IMR-90 (cell line): ENCODE measurements at regions of chr19 and their contacts with region 1.

Region 1: GRCh38 chr19:17511724-17512573 is 500 bp downstream of the PGLS start:
- DNase-seq: peak; percentile 75
- ATAC-seq: peak; percentile 59
- H3K4me3 ChIP-seq: peak overlapping the region; percentile 54
- H3K27ac ChIP-seq: peak overlapping the region; percentile 87
- H3K4me1 ChIP-seq: peaks cover 16% of the 10 kb centered on the region
- H3K27me3 ChIP-seq: no peaks in the 10 kb centered on the region
- CTCF ChIP-seq: no peak
- POLR2A ChIP-seq: no peak; the same call in 1 of the 2 replicates
- RAD21 ChIP-seq: no peak

Region 2: DNA sequence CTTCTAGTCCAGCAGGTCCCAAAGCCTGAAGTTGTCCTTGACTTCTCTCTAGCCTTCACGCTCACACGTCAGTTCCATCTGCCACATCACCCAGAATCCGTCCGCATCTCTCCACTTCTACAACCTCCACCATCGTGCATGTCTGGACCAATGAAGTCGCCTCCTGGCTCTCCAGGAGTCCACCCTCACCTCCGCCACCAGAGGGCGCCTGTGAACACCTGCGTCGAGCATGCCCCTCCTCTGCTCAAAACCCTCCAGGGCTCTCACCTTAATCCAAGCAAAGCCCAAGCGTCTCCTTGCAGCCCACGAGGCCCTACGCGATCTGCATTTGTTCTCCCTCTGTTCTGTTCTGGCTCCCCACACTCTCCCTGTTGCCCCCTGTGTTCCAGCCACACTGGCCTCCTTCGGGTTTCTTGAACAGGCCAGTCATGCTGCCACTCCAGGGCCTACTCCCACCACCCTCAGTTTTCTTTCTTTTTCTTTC is 251.1 kb before region 1 on chr19:
- CTCF ChIA-PET with region 1: no interaction called
- POLR2A ChIA-PET with region 1: no interaction called
- dilution Hi-C with region 1: no loop called
- in situ Hi-C with region 1: no loop called
- intact Hi-C with region 1: no loop called
- DNase-seq: peak; percentile 64
- ATAC-seq: peak; percentile 98
- H3K4me3 ChIP-seq: no peak overlapping the region
- H3K27ac ChIP-seq: no peak overlapping the region
- H3K4me1 ChIP-seq: no peaks in the 10 kb centered on the region
- H3K27me3 ChIP-seq: no peaks in the 10 kb centered on the region
- CTCF ChIP-seq: peak; percentile 74
- POLR2A ChIP-seq: no peak
- RAD21 ChIP-seq: peak; percentile 55

Region 3: DNA sequence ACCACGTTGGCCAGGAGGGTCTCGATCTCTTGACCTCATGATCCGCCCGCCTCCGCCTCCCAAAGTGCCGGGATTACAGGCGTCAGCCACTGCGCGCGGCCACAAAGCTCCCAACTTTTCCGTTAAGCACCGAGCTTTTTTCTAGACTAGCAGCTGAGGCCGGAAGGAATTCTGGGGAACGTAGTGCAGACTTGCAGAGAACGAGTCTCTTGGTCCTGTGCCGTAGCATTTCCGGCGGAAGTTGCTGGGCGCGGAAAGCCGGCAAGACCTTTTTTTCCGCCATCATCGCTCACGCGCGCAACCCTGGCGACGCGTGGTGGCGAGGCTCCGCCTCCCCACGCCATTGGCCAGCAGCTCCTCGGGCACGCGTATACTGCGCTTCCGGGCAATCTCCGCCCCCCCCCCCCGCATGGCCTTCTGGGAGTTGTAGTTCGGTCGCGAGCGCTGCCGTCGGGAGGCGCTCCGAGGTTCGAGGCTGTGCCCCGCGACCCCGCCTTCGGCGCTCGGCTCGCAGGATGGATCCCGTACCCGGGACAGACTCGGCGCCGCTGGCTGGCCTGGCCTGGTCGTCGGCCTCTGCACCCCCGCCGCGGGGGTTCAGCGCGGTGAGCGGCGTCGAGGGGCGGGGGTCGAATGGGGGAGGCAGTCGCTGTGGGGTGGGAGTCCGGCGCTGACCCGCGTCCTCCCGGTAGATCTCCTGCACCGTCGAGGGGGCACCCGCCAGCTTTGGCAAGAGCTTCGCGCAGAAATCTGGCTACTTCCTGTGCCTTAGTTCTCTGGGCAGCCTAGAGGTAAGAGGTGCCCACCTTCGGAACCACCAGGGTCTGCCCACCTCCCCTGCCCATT is 92.1 kb before region 1 on chr19 and contains the start of gene MVB12A:
- CTCF ChIA-PET with region 1: no interaction called
- POLR2A ChIA-PET with region 1: interaction called, 15 read pairs
- dilution Hi-C with region 1: no loop called
- in situ Hi-C with region 1: no loop called
- intact Hi-C with region 1: no loop called
- DNase-seq: peak; percentile 99
- ATAC-seq: peak; percentile 99
- H3K4me3 ChIP-seq: peak within 1 kb of the TSS; percentile 72
- H3K27ac ChIP-seq: peak within 1 kb of the TSS; percentile 68
- H3K4me1 ChIP-seq: peaks cover 4% of the 10 kb centered on the region; the same call in 1 of the 2 replicates
- H3K27me3 ChIP-seq: 0 out of 2 replicates have a peak, but pooled peaks cover under 1% of the 10 kb centered on the region
- CTCF ChIP-seq: no peak
- POLR2A ChIP-seq: peak; percentile 42; the same call in 1 of the 2 replicates
- RAD21 ChIP-seq: no peak
- total RNA-seq, gene MVB12A: 13.8 and 13.9 TPM in 2 replicates

Region 4: DNA sequence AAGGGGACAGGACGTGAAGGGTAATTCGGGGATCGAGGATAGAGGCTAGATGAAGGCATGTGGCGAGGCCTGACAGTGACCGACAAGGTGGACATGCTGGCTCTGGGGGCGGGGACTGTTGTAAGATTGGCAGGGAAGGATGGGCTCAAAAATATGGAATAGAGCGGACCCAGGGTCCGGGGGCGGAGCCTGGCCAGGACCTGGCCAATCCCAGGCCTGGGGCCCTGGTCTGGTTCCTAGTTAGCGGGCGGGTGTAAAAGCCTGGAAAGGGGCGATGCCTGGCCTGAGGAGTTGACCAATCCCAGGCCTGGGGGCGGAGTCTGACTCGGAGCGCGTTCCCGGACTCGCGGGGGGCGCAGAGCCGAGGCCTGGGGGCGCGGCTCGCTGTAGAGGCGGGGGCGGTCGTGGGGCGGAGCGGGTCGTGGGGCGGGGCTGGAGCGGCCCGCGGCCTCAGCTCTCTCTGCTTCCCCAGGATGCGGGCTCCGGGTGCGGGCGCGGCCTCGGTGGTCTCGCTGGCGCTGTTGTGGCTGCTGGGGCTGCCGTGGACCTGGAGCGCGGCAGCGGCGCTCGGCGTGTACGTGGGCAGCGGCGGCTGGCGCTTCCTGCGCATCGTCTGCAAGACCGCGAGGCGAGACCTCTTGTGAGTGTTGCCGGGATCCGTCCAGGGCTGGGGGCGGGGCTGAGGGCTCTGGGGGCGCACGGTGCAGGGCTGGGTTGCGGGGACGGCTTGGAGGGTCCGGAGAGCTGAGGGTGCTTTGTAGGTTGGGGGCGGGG is 41.7 kb before region 1 on chr19 and contains the start of gene SLC27A1:
- CTCF ChIA-PET with region 1: interaction called, 5 read pairs
- POLR2A ChIA-PET with region 1: no interaction called
- dilution Hi-C with region 1: no loop called
- in situ Hi-C with region 1: no loop called
- intact Hi-C with region 1: loop called (anchors 1 kb)
- DNase-seq: peak; percentile 98
- ATAC-seq: peak; percentile 94
- H3K4me3 ChIP-seq: peak within 1 kb of the TSS; percentile 91
- H3K27ac ChIP-seq: peak within 1 kb of the TSS; percentile 73
- H3K4me1 ChIP-seq: peaks cover 12% of the 10 kb centered on the region
- H3K27me3 ChIP-seq: no peaks in the 10 kb centered on the region
- CTCF ChIP-seq: no peak
- POLR2A ChIP-seq: peak; percentile 58; the same call in 1 of the 2 replicates
- RAD21 ChIP-seq: no peak
- total RNA-seq, gene SLC27A1: 4.8 and 5.6 TPM in 2 replicates

Region 5: GRCh38 chr19:17555480-17555928 is 43.6 kb after region 1 on chr19 and contains the start of gene COLGALT1:
- CTCF ChIA-PET with region 1: no interaction called
- POLR2A ChIA-PET with region 1: no interaction called
- dilution Hi-C with region 1: no loop called
- in situ Hi-C with region 1: no loop called
- intact Hi-C with region 1: loop called (anchors 5 kb)
- DNase-seq: peak; percentile 94
- ATAC-seq: peak; percentile 95
- H3K4me3 ChIP-seq: peak within 1 kb of the TSS; percentile 84
- H3K27ac ChIP-seq: peak within 1 kb of the TSS; percentile 94
- H3K4me1 ChIP-seq: peaks cover 3% of the 10 kb centered on the region; the same call in 1 of the 2 replicates
- H3K27me3 ChIP-seq: no peaks in the 10 kb centered on the region
- CTCF ChIP-seq: no peak
- POLR2A ChIP-seq: no peak; the same call in none of the 2 replicates
- RAD21 ChIP-seq: no peak
- total RNA-seq, gene COLGALT1: 74.2 and 77.1 TPM in 2 replicates